ENCODE measurements at regions of chr16 and their contacts with region 1.

Region 1: DNA sequence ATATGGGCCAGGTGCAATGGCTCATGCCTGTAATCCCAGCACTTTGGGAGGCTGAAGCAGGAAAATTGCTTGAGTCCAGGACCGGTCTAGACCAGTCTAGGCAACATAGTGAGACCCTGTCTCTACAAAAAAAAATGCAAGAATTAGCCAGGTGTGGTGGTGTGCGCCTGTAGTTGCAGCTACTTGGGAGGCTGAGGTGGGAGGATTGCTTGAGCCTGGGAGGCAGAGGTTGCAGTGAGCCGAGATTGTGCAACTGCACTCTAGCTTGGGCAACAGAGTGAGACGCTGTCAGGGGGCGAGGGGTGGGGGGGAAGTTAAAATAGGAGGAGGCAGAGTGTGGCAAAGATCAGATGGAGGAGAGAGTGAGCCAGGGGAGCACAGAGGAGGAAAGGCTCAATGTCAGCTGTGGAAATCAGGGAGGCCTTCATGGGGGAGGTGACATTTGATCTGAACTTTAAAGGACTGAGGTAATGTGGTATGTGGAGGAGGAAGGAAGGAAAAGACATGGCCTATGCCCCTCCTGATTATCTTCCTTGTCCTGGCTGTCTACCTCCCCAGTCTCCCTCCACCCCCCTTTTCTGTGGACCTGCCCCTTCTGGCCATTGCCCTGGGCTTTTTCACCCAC is 4.7 kb upstream of the GOT2 start:
- DNase-seq: no peak
- H3K4me3 ChIP-seq: no peak overlapping the region
- H3K27ac ChIP-seq: no peak overlapping the region
- H3K4me1 ChIP-seq: no peaks in the 10 kb centered on the region
- H3K27me3 ChIP-seq: no peaks in the 10 kb centered on the region
- CTCF ChIP-seq: no peak
- POLR2A ChIP-seq: no peak

Region 2: GRCh38 chr16:58614212-58614611 is 124.6 kb before region 1 on chr16:
- intact Hi-C with region 1: no loop called
- DNase-seq: no peak
- H3K4me3 ChIP-seq: no peak overlapping the region
- H3K27ac ChIP-seq: no peak overlapping the region
- H3K4me1 ChIP-seq: no peaks in the 10 kb centered on the region
- H3K27me3 ChIP-seq: no peaks in the 10 kb centered on the region
- CTCF ChIP-seq: no peak
- POLR2A ChIP-seq: no peak

Region 3: DNA sequence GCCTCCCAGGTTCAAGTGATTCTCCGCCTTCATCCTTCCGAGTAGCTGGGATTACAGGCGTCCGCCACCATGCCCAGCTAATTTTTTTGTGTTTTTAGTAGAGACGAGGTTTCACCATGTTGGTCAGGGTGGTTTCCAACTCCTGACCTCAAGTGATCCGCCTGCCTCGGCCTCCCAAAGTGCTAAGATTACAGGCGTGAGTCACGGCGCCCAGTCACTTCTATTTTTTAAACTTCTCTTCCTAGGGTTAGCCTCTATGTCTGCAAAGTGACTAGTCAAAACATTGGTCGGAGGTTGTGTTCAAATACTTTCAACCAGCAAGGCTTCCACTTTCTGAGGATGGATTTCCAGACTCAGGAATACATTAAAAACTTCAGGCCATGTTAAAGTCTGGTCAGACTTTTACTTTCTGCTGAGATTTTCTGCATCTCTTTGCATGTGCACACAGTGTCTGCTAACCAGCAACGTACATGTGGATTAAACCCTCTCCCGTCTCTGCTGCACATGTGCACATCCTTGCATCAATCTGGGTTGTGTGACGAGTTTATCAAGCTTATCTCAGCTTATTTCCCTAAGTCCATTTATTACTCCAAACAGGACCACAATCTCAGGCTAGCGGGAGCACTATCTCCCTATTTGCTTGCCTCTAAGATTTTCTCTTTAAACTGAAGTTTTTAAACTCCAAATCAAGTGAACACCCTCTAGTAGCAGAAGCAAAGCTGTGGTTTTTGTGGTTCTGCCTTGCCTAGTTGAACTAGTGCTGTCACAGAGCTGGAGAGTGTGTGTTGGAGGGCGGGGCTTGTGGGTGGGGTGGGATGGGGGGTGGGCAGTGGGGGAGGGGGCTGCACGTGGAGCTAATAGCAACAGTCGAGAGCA is 520.5 kb after region 1 on chr16:
- intact Hi-C with region 1: loop called (anchors 5 kb)
- DNase-seq: no peak
- H3K4me3 ChIP-seq: no peak overlapping the region
- H3K27ac ChIP-seq: no peak overlapping the region
- H3K4me1 ChIP-seq: no peaks in the 10 kb centered on the region
- H3K27me3 ChIP-seq: no peaks in the 10 kb centered on the region
- CTCF ChIP-seq: no peak
- POLR2A ChIP-seq: no peak

Measured in breast epithelium (tissue), 4 donors.